MCF 10A (cell line): ENCODE measurements at regions of chr5 and their contacts with region 1.

Region 1: DNA sequence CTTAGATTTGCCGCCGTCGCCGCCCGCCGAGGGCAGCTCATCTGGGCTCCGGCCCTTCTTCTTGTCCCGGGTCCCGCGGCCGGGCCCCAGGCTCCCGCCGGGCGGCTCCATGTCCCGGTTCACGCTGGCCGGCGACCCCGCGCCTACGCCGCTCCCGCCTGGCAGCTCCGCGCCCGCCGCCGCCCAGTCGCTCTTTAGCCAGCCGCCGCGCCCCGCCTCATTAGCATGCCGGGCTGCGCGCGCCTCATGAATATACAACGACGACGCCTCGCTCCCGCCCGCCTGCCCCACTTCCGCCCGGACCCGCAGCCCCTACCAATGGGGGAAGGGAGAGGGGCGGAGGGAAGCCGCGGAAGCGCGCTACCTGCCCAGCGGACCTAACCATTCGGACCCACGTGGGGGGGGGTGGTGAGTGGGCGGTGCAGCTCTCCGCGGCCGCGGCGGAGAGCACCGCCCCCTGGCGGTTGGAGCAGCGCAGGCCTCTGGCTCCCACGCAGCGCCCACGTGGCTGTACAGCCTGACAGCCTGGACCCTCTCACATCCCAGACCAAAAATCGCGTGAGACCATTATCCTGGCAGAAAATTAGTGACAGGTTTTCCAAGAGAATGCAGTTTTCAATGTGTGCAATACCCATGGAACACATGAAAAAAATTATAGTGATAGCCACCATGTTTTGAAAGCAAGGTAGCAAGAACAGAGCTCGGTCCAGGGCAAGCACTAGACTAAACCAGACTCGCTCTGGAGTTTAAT is at the start of gene DIAPH1:
- DNase-seq: peak; percentile 99
- H3K4me3 Mint-ChIP-seq: peak within 1 kb of the TSS; percentile 96
- H3K27ac Mint-ChIP-seq: peak within 1 kb of the TSS; percentile 99
- H3K4me1 Mint-ChIP-seq: peaks cover 21% of the 10 kb centered on the region
- H3K27me3 Mint-ChIP-seq: no peaks in the 10 kb centered on the region
- CTCF ChIP-seq: peak; percentile 99
- total RNA-seq, gene DIAPH1: 203 and 228 TPM in 2 replicates

Region 2: DNA sequence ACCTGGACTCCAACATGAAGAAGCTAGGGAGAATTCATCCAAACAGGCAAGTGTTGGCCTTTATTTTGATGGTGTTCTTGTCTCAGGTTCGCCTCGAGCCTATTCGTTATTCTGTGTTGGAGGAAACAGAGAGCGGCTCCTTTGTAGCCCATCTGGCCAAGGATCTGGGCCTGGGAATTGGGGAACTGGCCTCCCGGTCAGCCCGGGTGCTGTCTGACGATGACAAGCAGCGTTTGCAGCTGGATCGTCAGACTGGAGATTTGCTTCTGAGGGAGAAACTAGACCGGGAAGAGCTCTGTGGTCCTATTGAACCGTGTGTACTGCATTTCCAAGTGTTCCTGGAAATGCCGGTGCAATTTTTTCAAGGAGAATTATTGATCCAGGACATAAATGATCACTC is 497.0 kb before region 1 on chr5:
- CTCF ChIA-PET with region 1: no interaction called
- POLR2A ChIA-PET with region 1: no interaction called
- intact Hi-C with region 1: no loop called
- DNase-seq: no peak
- H3K4me3 Mint-ChIP-seq: no peak overlapping the region
- H3K27ac Mint-ChIP-seq: no peak overlapping the region
- H3K4me1 Mint-ChIP-seq: no peaks in the 10 kb centered on the region
- H3K27me3 Mint-ChIP-seq: no peaks in the 10 kb centered on the region
- CTCF ChIP-seq: no peak

Region 3: DNA sequence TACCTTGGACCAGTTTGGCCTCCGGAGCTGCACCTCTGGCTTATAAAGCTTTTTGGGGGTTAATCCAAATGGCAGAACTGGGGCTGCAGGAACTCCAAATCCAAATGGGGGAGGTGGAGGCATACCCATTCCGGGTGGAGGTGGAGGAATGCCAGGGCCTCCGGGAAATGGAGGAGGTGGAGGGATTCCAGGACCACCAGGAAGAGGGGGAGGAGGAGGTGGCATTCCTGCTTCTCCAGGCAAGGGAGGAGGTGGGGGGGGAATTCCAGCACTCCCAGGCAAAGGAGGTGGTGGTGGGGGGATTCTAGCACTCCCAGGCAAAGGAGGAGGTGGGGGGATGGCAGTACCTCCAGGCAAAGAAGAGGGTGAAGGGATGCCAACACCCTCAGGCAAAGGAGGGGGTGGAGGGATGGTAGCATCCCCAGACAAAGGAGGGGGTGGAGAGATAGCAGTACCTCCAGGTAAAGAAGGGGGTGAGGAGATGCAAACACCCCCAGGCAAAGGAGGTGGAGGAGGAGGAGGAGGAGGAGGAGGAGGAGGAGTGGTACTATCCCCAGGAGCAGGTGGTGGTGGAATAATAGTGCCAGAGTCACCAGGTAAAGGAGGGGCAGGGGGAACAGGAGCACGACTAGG is 45.4 kb before region 1 on chr5:
- CTCF ChIA-PET with region 1: interaction called, 7 read pairs
- POLR2A ChIA-PET with region 1: interaction called, 11 read pairs
- intact Hi-C with region 1: no loop called
- DNase-seq: no peak
- H3K4me3 Mint-ChIP-seq: no peak overlapping the region
- H3K27ac Mint-ChIP-seq: no peak overlapping the region
- H3K4me1 Mint-ChIP-seq: no peaks in the 10 kb centered on the region
- H3K27me3 Mint-ChIP-seq: no peaks in the 10 kb centered on the region
- CTCF ChIP-seq: no peak

Region 4: DNA sequence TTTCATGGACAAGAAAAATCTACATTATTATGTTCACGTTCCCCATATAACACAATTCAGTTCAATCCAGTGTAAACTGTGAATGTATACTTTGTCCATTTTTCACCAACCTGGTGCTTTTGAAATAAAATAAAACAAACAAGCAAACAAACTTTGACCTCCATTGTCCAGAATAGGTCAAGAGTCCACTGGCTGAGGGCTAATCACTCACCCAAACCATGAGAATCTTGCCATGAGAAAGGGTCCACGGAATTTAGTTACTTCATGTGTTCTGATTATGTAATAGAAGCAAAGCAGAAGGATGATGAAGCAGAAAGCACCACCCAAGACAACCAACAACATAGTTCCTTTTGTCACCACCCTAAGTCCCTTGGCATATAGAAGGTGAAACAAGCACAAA is 28.9 kb before region 1 on chr5:
- CTCF ChIA-PET with region 1: interaction called, 465 read pairs
- POLR2A ChIA-PET with region 1: interaction called, 224 read pairs
- intact Hi-C with region 1: loop called (anchors 1 kb)
- DNase-seq: no peak
- H3K4me3 Mint-ChIP-seq: no peak overlapping the region
- H3K27ac Mint-ChIP-seq: no peak overlapping the region
- H3K4me1 Mint-ChIP-seq: peaks cover 15% of the 10 kb centered on the region
- H3K27me3 Mint-ChIP-seq: no peaks in the 10 kb centered on the region
- CTCF ChIP-seq: no peak

Region 5: GRCh38 chr5:141605523-141606277 is 13.3 kb before region 1 on chr5:
- CTCF ChIA-PET with region 1: interaction called, 165 read pairs
- POLR2A ChIA-PET with region 1: interaction called, 385 read pairs
- intact Hi-C with region 1: loop called (anchors 1 kb)
- DNase-seq: peak; percentile 63
- H3K4me3 Mint-ChIP-seq: peak overlapping the region; percentile 17
- H3K27ac Mint-ChIP-seq: peak overlapping the region; percentile 98
- H3K4me1 Mint-ChIP-seq: peaks cover 44% of the 10 kb centered on the region
- H3K27me3 Mint-ChIP-seq: no peaks in the 10 kb centered on the region
- CTCF ChIP-seq: no peak

Region 6: DNA sequence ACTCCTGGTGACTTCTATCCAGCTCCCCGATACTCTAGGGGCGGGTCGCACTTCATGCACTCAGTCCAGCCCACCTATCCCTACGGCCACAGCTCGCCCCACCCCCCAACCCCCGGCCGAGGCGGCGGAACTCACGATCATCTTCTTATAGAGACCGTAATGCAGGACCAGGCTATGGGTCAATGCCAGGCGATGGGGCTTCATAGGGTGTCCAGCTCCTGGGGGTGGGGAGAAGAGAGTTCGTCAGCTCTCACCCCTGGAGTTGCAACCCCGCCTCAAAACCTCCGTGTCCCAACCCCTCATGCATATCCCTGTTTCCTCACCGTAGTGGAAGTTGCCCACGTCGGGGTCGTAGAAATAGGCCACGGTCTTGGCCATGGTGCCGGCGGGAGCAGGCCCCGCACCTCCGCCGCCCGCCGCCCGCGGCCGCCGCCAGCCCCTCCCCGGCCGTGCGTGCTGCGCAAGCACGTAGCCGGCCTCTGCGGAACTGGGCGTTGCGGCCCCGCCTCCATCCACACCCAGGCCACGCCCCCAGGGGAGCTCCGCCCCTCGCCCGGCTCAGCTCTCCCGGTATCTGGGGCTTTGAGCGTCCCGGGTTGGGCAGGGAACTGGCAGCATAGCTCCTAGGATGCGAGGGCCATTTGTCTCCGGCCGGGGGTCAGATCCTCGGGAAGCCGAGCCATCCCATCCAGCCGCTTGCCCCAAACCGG is 17.6 kb after region 1 on chr5 and contains the starts of genes HDAC3 and RELL2:
- CTCF ChIA-PET with region 1: interaction called, 213 read pairs
- POLR2A ChIA-PET with region 1: interaction called, 349 read pairs
- intact Hi-C with region 1: loop called (anchors 2 kb)
- DNase-seq: peak; percentile 95
- H3K4me3 Mint-ChIP-seq: peak within 1 kb of the TSS; percentile 92
- H3K27ac Mint-ChIP-seq: peak within 1 kb of the TSS; percentile 47
- H3K4me1 Mint-ChIP-seq: peaks cover 42% of the 10 kb centered on the region
- H3K27me3 Mint-ChIP-seq: no peaks in the 10 kb centered on the region
- CTCF ChIP-seq: no peak
- total RNA-seq, gene HDAC3: 83.5 and 85.6 TPM in 2 replicates
- total RNA-seq, gene RELL2: 12.5 and 13.3 TPM in 2 replicates

Region 7: GRCh38 chr5:141641634-141642267 is 22.8 kb after region 1 on chr5:
- CTCF ChIA-PET with region 1: interaction called, 213 read pairs
- POLR2A ChIA-PET with region 1: interaction called, 349 read pairs
- intact Hi-C with region 1: loop called (anchors 2 kb)
- DNase-seq: peak; percentile 83
- H3K4me3 Mint-ChIP-seq: no peak overlapping the region
- H3K27ac Mint-ChIP-seq: no peak overlapping the region
- H3K4me1 Mint-ChIP-seq: peaks cover 34% of the 10 kb centered on the region
- H3K27me3 Mint-ChIP-seq: no peaks in the 10 kb centered on the region
- CTCF ChIP-seq: peak; percentile 25

Region 8: DNA sequence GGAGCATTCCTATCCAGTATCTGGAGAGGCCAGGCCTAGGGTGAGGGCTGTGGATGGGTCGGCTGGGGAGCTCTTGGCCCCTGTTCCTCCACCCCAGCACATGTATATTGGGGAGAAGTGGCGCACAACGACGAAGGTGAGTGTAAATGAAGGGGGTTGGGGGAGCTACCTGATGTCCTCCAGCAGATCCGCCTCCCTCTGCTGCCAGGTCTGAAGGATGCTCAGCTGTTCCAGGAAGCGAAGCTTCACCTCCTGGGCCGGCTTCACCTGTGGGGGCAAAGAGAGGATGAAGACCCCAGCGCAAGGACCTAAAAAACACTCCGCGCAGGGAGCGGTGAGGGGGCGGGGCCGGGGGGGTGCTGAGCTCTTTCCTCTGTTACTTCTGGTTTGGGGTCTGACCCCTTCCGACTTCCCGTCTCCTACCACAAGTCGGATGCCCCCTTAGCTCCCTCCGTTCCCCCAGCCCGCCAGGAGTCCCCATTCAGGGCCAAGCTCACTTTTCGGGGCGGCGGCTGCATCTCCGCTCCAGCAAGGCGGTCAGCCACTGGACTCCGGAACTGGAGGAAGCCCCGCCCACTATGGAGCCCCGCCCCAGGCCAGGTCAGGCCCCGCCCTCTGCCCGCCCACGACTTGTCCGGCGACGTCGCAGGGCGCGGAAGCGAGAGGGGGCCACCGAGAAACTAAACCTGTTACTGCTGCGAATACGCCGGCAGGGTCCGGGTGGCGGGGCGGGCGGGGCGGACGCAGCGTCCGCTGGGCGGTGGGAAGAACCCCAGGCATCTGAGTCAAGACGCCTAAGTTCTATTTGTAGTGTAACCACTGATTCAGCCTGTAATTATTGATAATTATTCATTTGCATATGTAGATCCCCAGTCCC is 32.1 kb after region 1 on chr5 and contains the start of gene FCHSD1:
- CTCF ChIA-PET with region 1: interaction called, 4 read pairs
- POLR2A ChIA-PET with region 1: interaction called, 10 read pairs
- intact Hi-C with region 1: no loop called
- DNase-seq: peak; percentile 87
- H3K4me3 Mint-ChIP-seq: peak within 1 kb of the TSS; percentile 95
- H3K27ac Mint-ChIP-seq: peak within 1 kb of the TSS; percentile 74
- H3K4me1 Mint-ChIP-seq: peaks cover 35% of the 10 kb centered on the region
- H3K27me3 Mint-ChIP-seq: no peaks in the 10 kb centered on the region
- CTCF ChIP-seq: no peak
- total RNA-seq, gene FCHSD1: 21.2 and 22.1 TPM in 2 replicates